ENCODE measurements at regions of chr16 and their contacts with region 1.

Region 1: DNA sequence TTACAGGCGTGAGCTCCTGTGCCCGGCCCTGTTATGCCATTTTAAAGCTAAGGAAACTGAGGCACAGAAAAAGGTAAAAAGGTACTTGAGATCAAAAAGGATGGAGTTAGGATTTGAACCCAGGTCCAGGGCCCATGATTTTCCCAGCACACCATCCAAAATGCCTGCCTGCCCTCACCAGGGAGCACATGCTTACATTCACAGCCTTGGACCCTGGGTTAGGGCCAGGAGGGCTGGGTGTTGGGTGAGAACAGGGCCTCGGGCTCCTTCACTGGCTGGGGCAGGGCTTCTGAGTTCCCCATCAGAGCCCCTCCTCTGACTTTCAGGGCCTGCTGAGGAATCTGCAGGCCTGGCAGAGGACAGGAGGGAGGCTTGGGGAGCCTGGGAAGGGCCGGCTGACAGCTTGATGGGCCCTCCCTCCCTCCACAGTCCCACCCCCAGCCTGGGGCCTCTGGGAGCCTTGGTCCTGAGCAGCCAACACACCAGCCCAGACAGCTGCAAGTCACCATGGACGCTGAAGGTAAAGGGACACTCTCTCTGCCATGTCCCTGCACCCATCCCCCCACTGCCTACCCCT is at the start of gene QPRT:
- DNase-seq: peak; percentile 90 to 92
- H3K4me3 ChIP-seq: peak within 1 kb of the TSS; percentile 55
- H3K4me3 Mint-ChIP-seq: peak within 1 kb of the TSS; percentile 96
- H3K27ac Mint-ChIP-seq: peak within 1 kb of the TSS; percentile 96
- H3K4me1 ChIP-seq: peaks cover 9% of the 10 kb centered on the region
- H3K4me1 Mint-ChIP-seq: peaks cover 9% of the 10 kb centered on the region
- H3K27me3 ChIP-seq: no peaks in the 10 kb centered on the region
- H3K27me3 Mint-ChIP-seq: no peaks in the 10 kb centered on the region
- CTCF ChIP-seq: no peak
- total RNA-seq, gene QPRT: 176 and 178 TPM in 2 replicates

Region 2: DNA sequence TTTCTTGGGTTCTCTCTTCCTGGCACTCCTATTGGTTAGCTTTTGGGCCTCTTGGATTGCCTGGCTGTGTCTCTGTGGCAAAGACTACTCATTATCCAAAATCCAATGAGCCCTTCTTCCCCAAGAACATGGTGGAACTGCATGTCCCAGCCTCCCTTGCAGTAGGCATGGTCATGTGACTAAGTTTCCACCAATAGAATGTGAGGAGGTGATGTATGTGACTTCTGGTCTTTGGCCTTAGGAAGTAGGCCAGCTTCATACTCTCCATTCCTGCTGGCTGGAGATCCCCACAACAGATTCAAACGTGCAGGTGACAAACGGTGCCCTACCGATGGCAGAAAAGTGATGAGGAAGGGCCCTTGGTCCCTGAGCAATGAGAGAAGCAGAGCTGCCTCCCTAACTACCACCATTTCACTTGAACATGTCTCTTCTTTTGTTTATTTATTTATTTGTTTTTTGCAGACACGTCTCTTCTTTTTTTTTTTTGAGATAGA is 33.0 kb before region 1 on chr16:
- CTCF ChIA-PET with region 1: interaction called, 5 read pairs
- POLR2A ChIA-PET with region 1: interaction called, 8 read pairs
- intact Hi-C with region 1: loop called (anchors 2 kb)
- DNase-seq: peak; percentile 62 to 72
- H3K4me3 ChIP-seq: no peak overlapping the region
- H3K4me3 Mint-ChIP-seq: no peak overlapping the region
- H3K27ac Mint-ChIP-seq: no peak overlapping the region
- H3K4me1 ChIP-seq: peaks cover 8% of the 10 kb centered on the region; the same call in 1 of the 2 replicates
- H3K4me1 Mint-ChIP-seq: peaks cover 7% of the 10 kb centered on the region
- H3K27me3 ChIP-seq: no peaks in the 10 kb centered on the region
- H3K27me3 Mint-ChIP-seq: no peaks in the 10 kb centered on the region
- CTCF ChIP-seq: no peak

Region 3: GRCh38 chr16:29653471-29653870 is 25.3 kb before region 1 on chr16:
- CTCF ChIA-PET with region 1: interaction called, 3 read pairs
- POLR2A ChIA-PET with region 1: interaction called, 11 read pairs
- intact Hi-C with region 1: no loop called
- DNase-seq: no peak
- H3K4me3 ChIP-seq: no peak overlapping the region
- H3K4me3 Mint-ChIP-seq: no peak overlapping the region
- H3K27ac Mint-ChIP-seq: no peak overlapping the region
- H3K4me1 ChIP-seq: peaks cover 11% of the 10 kb centered on the region
- H3K4me1 Mint-ChIP-seq: peaks cover 24% of the 10 kb centered on the region
- H3K27me3 ChIP-seq: no peaks in the 10 kb centered on the region
- H3K27me3 Mint-ChIP-seq: no peaks in the 10 kb centered on the region
- CTCF ChIP-seq: no peak

Measured in Caco-2 (cell line).